ENCODE measurements at regions of chr17 and their contacts with region 1.

Region 1: GRCh38 chr17:67441052-67441927 is 64.2 kb downstream of the PITPNC1 start:
- DNase-seq: peak; percentile 79
- H3K4me3 Mint-ChIP-seq: peak overlapping the region; percentile 74
- H3K27ac Mint-ChIP-seq: peak overlapping the region; percentile 99
- H3K4me1 Mint-ChIP-seq: peaks cover 42% of the 10 kb centered on the region
- H3K27me3 Mint-ChIP-seq: no peaks in the 10 kb centered on the region

Region 2: DNA sequence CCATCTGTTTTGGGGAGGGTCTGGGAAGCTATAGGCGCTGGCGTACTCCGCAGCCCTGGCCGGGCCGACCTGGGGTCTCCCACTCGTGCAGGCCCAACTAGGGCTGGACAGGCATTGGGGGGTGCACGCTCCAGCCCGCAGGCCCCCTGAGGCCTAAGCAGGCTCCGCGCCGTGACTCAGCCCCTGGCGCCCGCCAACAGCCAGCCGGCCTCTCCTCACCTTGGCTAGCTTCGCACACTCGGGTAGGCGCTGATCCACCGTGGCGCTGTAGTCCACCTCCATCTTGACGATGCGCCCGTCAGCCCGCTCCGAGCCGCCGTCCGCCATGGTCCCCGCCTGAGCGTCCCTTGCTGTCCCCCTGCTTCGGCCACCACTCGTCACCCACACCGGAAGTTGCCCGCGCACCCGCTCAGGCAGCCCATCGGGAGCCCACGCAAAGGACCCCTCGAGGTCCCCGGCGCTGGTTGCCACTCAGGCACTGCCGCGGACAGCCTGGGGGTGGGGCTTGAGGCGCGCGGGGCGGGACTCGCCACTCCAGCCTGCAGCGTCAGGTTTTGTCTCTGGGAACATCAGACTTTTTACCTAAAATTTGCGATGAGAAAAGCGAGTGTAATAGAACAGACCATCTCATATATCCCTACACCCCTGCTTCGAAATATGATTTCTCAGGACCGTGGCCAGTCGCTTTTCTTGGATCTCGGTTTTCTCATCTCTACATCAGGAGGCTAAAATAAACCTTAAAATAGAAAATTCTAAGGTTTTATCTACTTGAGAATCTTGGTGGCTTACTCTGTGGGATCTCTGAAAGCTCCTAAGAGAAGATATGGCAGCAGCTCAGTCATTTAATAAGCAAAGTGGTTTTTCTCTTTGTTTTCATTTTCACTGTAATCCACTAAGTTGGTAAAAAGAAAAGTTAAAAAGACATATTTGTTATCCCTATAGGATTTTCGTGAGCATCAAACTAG is 74.8 kb before region 1 on chr17 and contains the start of gene PSMD12:
- CTCF ChIA-PET with region 1: no interaction called
- POLR2A ChIA-PET with region 1: interaction called, 25 read pairs
- DNase-seq: peak; percentile 94
- H3K4me3 Mint-ChIP-seq: peak within 1 kb of the TSS; percentile 99
- H3K27ac Mint-ChIP-seq: peak within 1 kb of the TSS; percentile 96
- H3K4me1 Mint-ChIP-seq: peaks cover 49% of the 10 kb centered on the region
- H3K27me3 Mint-ChIP-seq: peaks cover 2% of the 10 kb centered on the region
- total RNA-seq, gene PSMD12: 49.3 to 50.0 TPM

Region 3: DNA sequence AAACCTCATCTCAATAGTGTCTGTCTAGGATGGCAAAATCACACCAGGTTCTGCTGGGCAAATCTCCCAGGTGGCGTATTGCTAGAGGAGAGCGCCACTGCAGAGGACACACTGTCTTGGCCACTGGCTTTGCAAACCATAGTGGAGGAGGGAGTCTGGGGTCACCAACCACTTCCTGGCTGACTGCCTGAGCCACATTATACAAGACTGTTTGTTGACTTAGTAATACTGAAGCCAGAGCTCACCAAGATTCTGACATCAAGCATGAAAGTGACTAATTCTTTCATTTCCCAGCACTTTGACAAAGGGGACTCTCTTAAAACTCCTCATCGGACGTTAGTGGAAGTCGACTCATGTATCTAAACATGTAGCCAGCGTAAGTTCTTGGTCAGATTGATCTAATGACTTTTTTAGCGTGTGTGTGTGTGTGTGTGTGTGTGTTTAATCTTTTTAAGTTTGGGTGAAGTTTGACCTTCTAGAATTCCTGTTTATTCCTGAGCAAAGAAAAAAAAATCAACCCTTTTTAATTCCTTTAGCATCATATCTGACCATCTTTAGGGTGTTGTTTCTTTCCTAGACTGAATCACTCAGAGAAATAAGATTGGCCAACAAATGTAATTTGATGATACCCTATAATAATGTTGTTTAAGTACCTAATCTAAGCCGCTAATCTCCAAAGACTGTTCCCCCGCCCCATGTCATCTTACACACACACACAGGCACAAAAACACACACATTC is 50.5 kb before region 1 on chr17:
- CTCF ChIA-PET with region 1: interaction called, 20 read pairs
- POLR2A ChIA-PET with region 1: interaction called, 29 read pairs
- DNase-seq: peak; percentile 78
- H3K4me3 Mint-ChIP-seq: peak overlapping the region; percentile 40
- H3K27ac Mint-ChIP-seq: peak overlapping the region; percentile 78
- H3K4me1 Mint-ChIP-seq: peaks cover 45% of the 10 kb centered on the region
- H3K27me3 Mint-ChIP-seq: no peaks in the 10 kb centered on the region

Region 4: DNA sequence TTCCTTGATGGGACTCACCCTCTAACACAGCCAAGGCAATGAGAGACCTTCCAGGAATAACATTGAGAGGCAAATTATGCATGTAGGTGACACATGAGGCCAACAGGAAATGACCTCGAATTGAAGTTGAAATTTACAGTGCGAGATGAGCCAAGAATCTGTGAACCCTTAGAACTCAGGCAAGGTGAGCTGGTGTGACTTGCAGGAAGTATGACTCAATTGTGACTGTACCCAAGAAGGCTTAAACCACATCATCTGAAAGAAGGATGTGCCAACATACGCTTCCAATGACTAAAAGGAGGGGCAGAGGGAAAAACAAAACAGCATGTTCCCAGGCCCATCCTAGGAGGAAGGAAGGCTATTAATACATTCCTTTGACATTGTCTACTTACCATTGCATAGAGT is 19.4 kb before region 1 on chr17:
- CTCF ChIA-PET with region 1: interaction called, 11 read pairs
- POLR2A ChIA-PET with region 1: interaction called, 55 read pairs
- DNase-seq: peak; percentile 64
- H3K4me3 Mint-ChIP-seq: no peak overlapping the region
- H3K27ac Mint-ChIP-seq: peak overlapping the region; percentile 83
- H3K4me1 Mint-ChIP-seq: peaks cover 51% of the 10 kb centered on the region
- H3K27me3 Mint-ChIP-seq: no peaks in the 10 kb centered on the region

Region 5: DNA sequence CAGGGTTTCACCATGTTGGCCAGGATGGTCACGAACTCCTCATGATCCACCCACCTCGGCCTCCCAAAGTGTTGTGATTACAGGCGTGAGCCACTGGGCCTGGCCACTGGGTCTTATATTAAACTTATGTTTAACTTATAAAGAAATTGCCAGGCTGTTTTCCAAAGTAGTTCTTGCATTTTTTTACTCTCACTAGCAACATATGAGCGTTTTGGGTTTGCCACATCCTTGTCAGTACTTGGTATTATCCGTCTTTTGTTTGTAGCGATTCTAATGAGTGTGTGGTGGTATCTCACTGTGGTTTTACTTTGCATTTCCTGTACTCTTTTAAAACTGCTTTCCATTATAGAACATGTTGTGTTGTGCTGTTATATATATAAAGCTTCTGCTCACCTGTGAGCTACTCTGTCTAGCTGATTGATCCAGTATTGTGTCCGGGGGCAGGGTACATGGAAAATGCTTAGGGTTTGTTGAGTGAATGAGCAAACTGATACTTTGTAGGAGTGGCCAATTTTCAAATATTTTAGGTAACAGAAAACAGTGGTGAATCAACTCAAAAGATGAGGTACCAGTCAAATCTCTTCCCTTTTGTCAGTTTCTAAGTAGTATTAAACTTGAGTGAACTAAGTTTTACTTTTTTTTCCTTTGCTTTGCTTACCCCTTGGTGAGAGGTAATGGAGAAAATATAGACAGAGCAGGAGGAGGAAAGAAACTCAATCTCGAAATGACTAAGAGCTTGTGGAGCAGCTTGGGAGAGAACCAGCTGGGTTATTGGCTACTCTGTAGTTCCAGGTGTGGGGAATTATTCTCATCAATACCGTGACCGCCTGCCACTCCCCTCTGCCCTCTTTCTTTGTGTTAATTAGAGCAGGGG is 11.6 kb after region 1 on chr17:
- CTCF ChIA-PET with region 1: interaction called, 18 read pairs
- POLR2A ChIA-PET with region 1: interaction called, 122 read pairs
- DNase-seq: peak; percentile 39
- H3K4me3 Mint-ChIP-seq: peak overlapping the region; percentile 59
- H3K27ac Mint-ChIP-seq: peak overlapping the region; percentile 95
- H3K4me1 Mint-ChIP-seq: peaks cover 62% of the 10 kb centered on the region
- H3K27me3 Mint-ChIP-seq: peaks cover 2% of the 10 kb centered on the region

Region 6: DNA sequence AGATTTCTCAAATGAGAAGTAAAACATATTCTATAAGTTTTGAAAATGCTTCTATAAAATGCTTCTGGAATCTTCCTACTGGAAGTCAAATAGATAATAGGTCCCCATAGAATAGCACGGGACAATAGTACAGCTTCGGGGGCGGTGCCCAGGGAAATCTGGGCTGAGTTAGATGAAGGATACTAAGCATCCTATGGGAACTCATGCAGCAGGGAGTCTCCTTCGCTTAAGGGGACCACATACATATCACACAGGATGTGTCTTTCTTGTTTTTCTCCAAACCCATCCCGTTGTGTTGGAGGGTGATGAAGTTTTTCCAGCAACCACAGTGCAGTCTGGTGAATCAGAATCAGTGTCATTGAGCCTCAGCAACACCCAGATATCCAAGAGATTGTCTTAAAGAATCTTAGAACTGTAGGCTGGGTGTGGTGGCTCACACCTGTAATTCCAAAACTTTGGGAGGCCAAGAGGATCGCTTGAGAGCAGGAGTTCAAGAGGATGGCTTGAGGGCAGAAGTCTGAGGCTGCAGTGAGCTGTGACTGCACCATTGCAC is 20.0 kb after region 1 on chr17:
- CTCF ChIA-PET with region 1: interaction called, 6 read pairs
- POLR2A ChIA-PET with region 1: interaction called, 15 read pairs
- DNase-seq: no peak
- H3K4me3 Mint-ChIP-seq: no peak overlapping the region
- H3K27ac Mint-ChIP-seq: no peak overlapping the region
- H3K4me1 Mint-ChIP-seq: peaks cover 27% of the 10 kb centered on the region
- H3K27me3 Mint-ChIP-seq: no peaks in the 10 kb centered on the region

Region 7: GRCh38 chr17:67469208-67469895 is 28.1 kb after region 1 on chr17:
- CTCF ChIA-PET with region 1: interaction called, 36 read pairs
- POLR2A ChIA-PET with region 1: interaction called, 71 read pairs
- DNase-seq: no peak
- H3K4me3 Mint-ChIP-seq: no peak overlapping the region
- H3K27ac Mint-ChIP-seq: no peak overlapping the region
- H3K4me1 Mint-ChIP-seq: peaks cover 28% of the 10 kb centered on the region
- H3K27me3 Mint-ChIP-seq: peaks cover 2% of the 10 kb centered on the region

Region 8: DNA sequence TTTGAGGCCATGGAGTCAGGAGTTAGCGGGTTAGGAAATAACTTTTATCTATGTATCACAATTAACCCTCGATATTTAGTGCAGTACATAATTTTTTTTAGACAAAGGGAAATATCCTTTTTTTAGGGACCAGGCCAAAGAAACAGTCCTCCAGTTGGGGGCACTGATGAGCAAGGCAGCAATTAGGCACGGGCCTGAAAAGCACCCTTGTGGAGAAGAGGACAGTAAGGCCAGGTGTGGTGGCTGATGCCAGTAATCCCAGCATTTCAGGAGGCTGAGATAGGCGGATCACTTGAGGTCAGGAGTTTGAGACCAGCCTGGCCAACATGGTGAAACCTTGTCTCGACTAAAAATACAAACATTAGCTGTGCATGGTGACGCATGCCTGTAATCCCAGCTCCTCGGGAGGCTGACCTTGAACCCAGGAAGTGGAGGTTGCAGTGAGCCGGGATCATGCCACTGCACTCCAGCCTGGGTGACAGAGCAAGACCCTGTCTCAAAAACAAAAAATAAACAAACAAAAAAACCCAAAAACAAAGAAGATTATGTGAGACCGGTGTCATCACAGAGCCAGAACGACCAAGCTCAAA is 118.2 kb after region 1 on chr17:
- CTCF ChIA-PET with region 1: no interaction called
- POLR2A ChIA-PET with region 1: no interaction called
- DNase-seq: no peak
- H3K4me3 Mint-ChIP-seq: no peak overlapping the region
- H3K27ac Mint-ChIP-seq: no peak overlapping the region
- H3K4me1 Mint-ChIP-seq: no peaks in the 10 kb centered on the region
- H3K27me3 Mint-ChIP-seq: no peaks in the 10 kb centered on the region

Region 9: DNA sequence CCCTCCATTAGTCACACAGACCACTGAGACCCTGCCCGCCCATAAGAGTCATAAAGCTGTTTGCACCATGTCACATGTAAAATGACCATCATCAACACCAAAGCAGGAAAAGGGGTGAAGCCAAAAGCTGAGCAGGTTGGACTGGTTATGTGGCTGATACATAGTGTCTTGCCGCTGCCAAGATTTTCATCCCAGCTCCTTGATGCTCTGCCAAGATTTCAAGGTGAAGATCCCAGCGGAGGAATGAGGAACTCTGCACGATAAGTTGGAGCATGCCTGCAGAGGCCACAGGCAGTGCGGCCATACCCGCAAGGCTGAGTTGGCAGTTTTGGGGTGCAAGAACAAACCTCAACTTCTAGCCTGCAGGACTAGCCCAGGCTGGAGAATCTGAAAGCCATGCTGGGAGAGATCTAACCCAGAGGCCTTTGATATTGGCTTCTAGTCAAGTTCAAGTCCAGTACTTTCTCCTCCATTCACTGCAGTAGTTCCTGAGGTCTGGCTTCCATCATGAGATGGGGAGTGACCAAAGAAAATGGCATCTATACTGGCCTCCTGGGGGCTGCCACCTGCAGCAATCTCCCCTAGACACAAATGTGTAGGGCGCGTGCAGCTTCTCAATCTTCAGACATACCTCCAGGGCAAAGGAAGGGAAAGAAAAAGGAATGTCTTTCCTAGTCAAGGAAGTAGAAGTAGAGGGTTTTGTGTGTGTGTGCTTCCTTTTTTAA is 196.8 kb after region 1 on chr17:
- CTCF ChIA-PET with region 1: no interaction called
- POLR2A ChIA-PET with region 1: no interaction called
- DNase-seq: no peak
- H3K4me3 Mint-ChIP-seq: no peak overlapping the region
- H3K27ac Mint-ChIP-seq: no peak overlapping the region
- H3K4me1 Mint-ChIP-seq: no peaks in the 10 kb centered on the region
- H3K27me3 Mint-ChIP-seq: no peaks in the 10 kb centered on the region

Measured in activated CD4-positive, alpha-beta memory T cell treated with anti-CD3 and anti-CD28 coated beads, Interleukin-2, amount 10 ng/mL, durations not matched to agents 7 days and 5 days (primary cell).